Right lobe of liver (tissue), 6 donors: ENCODE measurements at regions of chr3 and their contacts with region 1.

Region 1: GRCh38 chr3:149480325-149481017 is 6.0 kb downstream of the TM4SF4 start:
- DNase-seq: peak; percentile 76 to 86 (median 81)
- ATAC-seq: peak; percentile 73 to 90 (median 82)
- H3K4me3 ChIP-seq: no peak overlapping the region
- H3K27ac ChIP-seq: peak overlapping the region; percentile 71 to 98 (median 93)
- H3K4me1 ChIP-seq: peaks cover 0 to 22% (median 8%) of the 10 kb centered on the region in 4 donors
- H3K27me3 ChIP-seq: no peaks in the 10 kb centered on the region
- CTCF ChIP-seq: peak; percentile 76 to 90 (median 89)
- POLR2A ChIP-seq: no peak

Region 2: GRCh38 chr3:149352556-149352955 is 127.9 kb before region 1 on chr3:
- intact Hi-C with region 1: loop called in 1 of 2 experiments (anchors 10 kb)
- DNase-seq: peak; percentile 58 to 72 (median 71)
- ATAC-seq: peak; percentile 94 to 99 (median 98)
- H3K4me3 ChIP-seq: no peak overlapping the region
- H3K27ac ChIP-seq: no peak overlapping the region
- H3K4me1 ChIP-seq: peaks cover 0 to 5% (median 0%) of the 10 kb centered on the region in 4 donors
- H3K27me3 ChIP-seq: no peaks in the 10 kb centered on the region
- CTCF ChIP-seq: peak; percentile 74 to 77 (median 76)
- POLR2A ChIP-seq: no peak